Cardiac septum (tissue), 1 donor: ENCODE measurements at regions of chr11 and their contacts with region 1.

Region 1: DNA sequence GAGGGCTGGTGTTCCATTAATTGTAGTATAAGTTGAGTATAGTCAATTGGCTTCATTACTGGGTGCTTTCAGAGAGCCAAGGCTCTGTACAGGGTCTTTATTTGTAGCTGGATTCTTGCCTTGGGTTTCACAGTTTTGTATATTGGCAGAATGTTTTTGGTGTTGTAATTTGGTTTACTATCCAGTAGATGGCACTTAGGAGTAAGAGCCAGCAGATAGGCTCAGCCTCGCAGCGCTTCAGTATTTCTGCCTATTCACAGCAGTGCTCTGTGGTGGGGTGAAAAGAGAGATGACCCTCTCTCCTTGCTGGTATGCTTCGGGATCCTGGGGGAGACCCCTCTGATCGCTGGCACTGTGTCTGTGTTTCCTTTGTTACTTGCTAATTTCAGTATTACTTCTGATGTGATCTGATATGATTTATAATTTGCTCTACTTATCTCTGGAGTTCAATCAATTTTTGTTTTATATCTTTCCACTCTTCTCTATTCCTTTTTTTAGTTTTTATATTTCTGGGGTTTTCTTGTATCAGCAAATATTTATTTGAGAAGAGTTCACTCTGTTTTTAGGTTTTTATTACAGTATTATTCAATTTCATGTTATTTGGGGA is 52.2 kb downstream of the ANO5 start:
- DNase-seq: no peak

Region 2: GRCh38 chr11:21723678-21724077 is 521.4 kb before region 1 on chr11:
- intact Hi-C with region 1: no loop called
- DNase-seq: no peak

Region 3: GRCh38 chr11:22192642-22193347 is 52.3 kb before region 1 on chr11 and contains the start of gene ANO5:
- intact Hi-C with region 1: loop called (anchors 10 kb)
- DNase-seq: peak; percentile 87
- total RNA-seq, gene ANO5: 58.4 TPM